ENCODE measurements at regions of chr17 and their contacts with region 1.

Region 1: DNA sequence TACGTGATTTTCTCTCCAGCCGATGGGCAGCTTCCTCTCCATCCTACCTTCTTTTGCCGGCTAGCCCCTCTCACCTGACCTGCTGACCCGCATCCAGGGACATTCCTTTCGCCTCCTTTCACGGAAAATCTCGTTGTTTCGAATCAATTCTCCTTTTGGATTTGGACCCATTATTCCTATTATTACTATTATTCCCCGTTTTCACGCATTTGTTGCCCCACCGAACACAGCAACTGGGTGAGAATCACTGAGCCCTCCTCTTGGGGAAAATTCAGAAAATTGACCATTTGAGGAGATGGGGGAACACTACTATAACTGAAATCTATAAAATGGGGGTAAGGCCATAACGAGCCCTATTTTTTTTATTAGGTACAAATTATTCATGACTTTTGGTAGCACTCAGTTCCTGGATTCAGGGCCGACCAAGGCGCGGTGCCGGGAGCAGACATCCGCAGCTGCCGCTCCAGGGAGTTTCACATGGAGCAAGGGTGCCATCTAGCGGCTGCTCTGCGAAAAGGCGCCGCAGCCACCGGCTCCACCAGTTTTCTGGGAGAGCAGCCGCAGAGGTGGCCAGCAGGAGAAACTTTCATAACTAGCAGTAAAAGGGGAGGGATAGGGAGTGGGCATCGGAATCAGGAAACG is 3.3 kb upstream of the HOXB8 start:
- H3K4me3 Mint-ChIP-seq: no peak overlapping the region
- H3K27ac Mint-ChIP-seq: no peak overlapping the region
- H3K4me1 Mint-ChIP-seq: peaks cover 16% of the 10 kb centered on the region
- H3K27me3 Mint-ChIP-seq: peaks cover 99% of the 10 kb centered on the region

Region 2: DNA sequence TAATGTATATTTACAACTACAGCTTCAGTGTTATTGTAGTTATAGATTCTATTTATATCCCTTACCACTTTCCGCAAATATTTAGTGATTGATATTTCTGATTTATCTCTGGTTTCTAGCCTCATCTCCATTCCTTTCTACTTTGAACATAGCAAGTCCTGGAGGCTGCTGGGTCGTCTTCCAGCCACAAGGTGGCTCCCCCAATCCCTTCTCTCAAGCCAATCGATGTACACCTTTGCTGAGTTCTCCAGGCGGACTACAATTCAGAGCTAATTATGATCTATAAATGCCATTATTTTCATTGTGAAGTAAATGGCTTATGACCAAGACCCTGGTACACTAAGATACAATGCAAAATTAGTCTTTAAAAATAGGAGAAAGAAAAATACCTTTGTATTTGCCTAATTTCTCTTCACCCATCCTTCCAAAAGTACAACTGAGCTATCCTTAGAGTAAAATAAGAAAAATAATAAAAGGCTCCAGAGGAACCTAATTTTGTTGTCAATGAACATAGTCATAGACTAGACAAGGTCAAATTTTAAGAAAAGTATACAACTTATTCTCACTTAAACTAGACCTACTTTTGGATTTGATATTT is 310.5 kb before region 1 on chr17:
- intact Hi-C with region 1: loop called (anchors 2 kb)
- H3K4me3 Mint-ChIP-seq: no peak overlapping the region
- H3K27ac Mint-ChIP-seq: no peak overlapping the region
- H3K4me1 Mint-ChIP-seq: no peaks in the 10 kb centered on the region
- H3K27me3 Mint-ChIP-seq: peaks cover 26% of the 10 kb centered on the region

Region 3: GRCh38 chr17:48335858-48336500 is 282.4 kb before region 1 on chr17:
- intact Hi-C with region 1: loop called (anchors 1 kb)
- H3K4me3 Mint-ChIP-seq: no peak overlapping the region
- H3K27ac Mint-ChIP-seq: no peak overlapping the region
- H3K4me1 Mint-ChIP-seq: peaks cover 6% of the 10 kb centered on the region
- H3K27me3 Mint-ChIP-seq: peaks cover 20% of the 10 kb centered on the region

Region 4: DNA sequence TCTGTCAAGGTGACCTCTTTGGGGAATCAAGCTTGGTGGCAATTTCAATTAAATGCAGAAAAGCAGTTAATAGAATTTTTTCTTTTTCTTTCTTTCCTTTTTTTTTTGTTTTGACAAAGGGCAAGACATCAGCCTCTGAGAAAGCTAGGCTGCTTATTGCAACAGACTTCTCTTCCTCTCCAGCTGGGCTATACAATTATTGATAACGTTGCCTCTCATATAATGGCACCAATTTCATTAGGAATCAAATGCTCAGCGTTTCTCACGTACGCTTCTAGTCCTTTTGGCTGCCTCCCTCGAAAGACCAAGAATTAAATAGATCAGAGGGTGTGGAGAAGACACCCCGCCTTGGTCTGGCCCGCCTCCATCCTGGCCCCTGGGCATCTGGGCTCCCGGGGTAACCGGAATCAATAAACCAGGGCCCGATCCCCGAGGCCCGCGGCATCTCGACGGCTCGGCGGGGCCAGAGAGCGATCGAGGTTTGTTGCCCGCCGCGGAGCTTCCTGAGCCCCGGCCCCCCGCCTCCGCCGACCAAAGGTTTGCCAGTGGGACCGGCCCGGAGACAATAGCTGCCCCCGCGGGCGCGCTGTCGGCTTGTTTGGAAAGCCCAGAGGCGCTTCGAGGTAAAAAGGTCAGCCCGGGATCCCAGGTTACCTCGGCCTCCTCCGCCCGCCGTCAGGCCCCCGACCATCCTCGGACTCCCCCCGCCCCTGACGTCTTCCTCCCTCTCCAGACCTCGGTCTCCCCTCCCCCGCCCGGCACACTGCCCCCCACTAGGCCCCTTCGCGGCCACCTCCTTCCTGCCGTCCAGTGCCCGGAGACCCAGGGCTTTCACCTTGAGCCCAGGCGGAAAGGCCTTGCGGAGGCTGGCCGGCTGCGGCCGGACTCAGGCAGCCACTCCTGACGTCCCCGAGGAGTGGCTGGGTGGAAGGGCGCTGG is 91.5 kb before region 1 on chr17:
- intact Hi-C with region 1: no loop called
- H3K4me3 Mint-ChIP-seq: no peak overlapping the region
- H3K27ac Mint-ChIP-seq: no peak overlapping the region
- H3K4me1 Mint-ChIP-seq: no peaks in the 10 kb centered on the region
- H3K27me3 Mint-ChIP-seq: peaks cover 84% of the 10 kb centered on the region

Region 5: DNA sequence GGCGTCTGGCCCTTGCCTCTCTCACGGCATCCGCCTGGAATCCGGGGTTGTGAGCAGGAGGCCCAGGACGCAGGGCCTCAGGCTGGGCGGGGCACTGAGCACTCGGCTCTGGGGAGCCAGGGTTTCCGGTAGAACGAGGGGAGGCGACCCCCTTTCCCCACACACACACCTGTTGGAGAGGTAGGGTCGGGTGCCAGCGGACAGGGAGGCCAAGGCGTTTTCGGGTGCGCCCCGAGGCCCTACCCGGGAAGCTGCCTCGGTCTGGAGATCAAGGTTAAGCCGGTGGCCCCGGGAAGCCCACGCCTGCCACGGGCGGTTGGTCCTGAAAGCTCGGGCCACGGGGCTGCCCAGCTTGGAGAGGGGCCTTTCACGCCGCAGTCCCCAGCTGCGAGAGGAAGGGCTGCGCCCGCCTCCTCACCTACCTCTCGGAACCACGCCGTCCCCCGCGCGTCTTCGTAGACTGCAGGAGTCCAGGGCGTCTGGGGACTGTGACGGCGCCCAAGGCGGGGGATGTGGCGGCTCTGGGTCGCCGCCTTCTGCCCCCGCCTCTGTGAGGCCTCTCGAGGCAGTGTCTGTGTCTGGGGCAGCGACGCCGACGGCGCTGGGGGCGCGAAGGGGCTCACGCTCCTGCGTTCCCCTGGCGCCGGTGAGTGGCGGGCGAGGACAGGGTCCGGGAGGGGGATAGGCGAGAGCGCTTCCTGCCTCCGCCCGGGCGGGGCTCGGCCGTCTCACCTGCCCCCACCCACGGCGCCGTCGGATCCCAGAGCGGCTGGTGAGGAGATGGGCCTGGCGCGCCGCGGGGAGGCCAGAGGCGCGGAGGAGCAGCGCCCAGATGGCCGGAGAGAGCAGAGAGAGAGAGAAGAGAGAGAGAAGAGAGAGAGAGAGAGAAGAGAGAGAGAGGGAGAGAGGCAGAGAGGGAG is 28.1 kb after region 1 on chr17:
- intact Hi-C with region 1: no loop called
- H3K4me3 Mint-ChIP-seq: peak overlapping the region; percentile 72
- H3K27ac Mint-ChIP-seq: peak overlapping the region; percentile 13
- H3K4me1 Mint-ChIP-seq: peaks cover 22% of the 10 kb centered on the region
- H3K27me3 Mint-ChIP-seq: peaks cover 92% of the 10 kb centered on the region

Region 6: GRCh38 chr17:48718761-48719641 is 100.6 kb after region 1 on chr17:
- intact Hi-C with region 1: no loop called
- H3K4me3 Mint-ChIP-seq: peak overlapping the region; percentile 44
- H3K27ac Mint-ChIP-seq: no peak overlapping the region
- H3K4me1 Mint-ChIP-seq: peaks cover 41% of the 10 kb centered on the region
- H3K27me3 Mint-ChIP-seq: peaks cover 84% of the 10 kb centered on the region

Measured in dendritic cell treated with granulocyte-macrophage colony-stimulating factor and Interleukin-4, amounts not matched to agents 40 ng/mL and 50 ng/mL, for 4 days (primary cell).